Naive thymus-derived CD8-positive, alpha-beta T cell (primary cell): ENCODE measurements at regions of chr15 and their contacts with region 1.

Region 1: DNA sequence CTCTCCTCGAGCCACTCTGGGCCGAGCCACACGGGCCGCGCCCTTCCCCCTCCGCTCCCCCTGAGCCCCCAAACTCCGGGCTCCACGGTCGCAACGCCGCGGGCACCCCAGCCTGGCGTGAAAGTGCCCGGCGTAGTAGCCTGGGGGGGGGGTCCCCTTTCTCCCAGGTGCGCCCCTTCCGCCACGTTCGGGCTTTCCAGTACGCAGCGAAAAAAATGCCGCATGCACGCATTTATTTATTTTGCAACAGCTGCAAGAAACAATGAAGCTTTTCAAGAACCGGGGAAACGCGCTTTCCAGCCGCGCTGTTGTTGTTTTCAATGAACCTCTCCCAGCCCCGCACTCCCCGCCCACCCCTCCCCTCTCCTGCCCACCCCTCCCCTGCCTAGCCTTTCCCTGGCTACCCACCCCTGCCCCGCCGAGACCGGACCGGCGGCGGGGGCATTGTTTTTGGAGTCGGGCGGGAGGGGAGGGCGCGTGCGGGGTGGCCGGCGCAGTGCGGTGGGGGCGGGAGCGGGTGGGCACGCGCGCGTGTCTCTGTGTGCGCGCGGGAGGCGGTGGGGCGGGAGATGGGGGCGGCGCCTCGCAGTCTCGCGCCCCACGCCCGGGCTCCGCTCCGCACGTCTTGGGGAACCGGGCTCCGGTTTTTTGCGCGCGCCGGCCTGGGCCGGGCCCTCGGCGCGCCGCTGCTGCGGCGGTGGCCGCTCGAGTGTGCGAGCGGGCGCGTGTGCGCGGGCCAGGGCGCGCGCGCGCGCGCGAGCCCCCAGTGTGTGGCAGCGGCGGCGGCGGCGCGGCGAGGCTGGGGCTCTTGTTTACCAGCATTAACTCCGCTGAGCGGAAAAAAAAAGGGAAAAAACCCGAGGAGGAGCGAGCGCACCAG is at the start of gene IGF1R:
- DNase-seq: peak; percentile 84 to 95 (median 90)
- ATAC-seq: peak; percentile 41 to 62
- H3K4me3 Mint-ChIP-seq: peak within 1 kb of the TSS; percentile 80 to 95 (median 90)
- H3K27ac Mint-ChIP-seq: peak within 1 kb of the TSS; percentile 81 to 96 (median 94)
- H3K4me1 Mint-ChIP-seq: peaks cover 20 to 32% (median 28%) of the 10 kb centered on the region in 4 donors
- H3K27me3 Mint-ChIP-seq: peaks cover 0 to 29% (median 0%) of the 10 kb centered on the region in 5 donors
- polyA plus RNA-seq, gene IGF1R: 2.5 to 6.3 (median 4.9) TPM

Region 2: DNA sequence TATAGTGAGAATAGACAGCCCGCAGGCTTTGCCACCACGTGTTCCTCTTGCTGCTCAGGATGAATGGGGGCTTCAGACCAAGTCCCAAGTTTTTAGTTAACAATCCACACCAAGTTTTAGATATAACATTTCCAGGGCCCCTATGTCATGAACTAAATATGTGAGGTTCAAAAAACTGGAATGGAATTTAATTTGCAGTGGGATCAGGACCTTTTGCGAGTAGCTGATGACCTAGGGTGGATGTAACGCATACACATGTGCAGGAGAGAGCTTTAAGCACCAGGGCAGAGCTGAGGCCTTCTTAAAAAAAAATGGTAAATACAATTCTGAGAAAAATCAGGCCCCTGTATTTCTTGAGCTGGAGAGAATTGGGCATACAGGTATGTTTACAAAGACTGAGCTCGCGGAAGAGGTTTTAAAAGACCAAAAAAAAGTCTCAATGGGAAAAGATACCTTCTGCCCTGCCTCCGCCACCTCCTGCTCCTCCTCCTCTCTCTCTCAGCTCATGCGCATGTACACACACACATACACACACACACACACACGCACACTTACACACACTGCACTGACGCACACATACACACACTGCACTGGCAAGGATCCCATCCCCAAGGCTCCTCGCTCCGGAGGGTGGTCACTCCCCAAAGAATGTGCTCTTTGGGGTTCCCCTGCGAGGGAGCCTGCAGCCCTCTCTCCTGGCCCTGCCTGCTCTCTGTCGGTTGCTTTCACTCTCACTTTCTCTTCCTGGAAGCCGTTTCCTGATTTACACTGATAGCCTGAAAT is 47.9 kb before region 1 on chr15:
- POLR2A ChIA-PET with region 1: interaction called, 41 read pairs
- DNase-seq: peak in 9 of 10 donors; percentile 12 to 41 (median 19)
- ATAC-seq: peak; percentile 86 to 88
- H3K4me3 Mint-ChIP-seq: peak overlapping the region; percentile 83 to 97 (median 92)
- H3K27ac Mint-ChIP-seq: peak overlapping the region; percentile 93 to 99 (median 96)
- H3K4me1 Mint-ChIP-seq: peaks cover 17 to 24% (median 19%) of the 10 kb centered on the region in 4 donors
- H3K27me3 Mint-ChIP-seq: peaks cover 0 to 4% (median 0%) of the 10 kb centered on the region in 5 donors

Region 3: DNA sequence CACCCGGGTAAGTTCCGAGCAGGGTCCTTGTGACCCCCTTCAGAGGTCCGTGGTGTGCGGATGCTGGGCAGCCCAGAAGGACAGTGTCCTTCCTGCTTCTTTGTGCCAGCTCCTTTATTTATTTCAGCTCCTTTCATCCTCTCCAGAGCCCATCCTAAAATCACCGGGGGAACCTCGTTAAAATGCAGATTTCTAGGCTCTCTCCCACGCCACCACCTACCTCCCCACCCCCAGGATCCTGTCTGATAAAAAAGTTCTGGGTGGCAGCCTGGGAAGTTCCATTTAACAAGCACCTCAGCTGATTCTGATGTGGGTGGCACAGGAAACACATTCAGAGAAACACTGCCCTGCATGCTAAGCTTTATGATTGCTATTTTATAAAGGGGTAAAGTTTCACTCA is 12.2 kb before region 1 on chr15:
- POLR2A ChIA-PET with region 1: interaction called, 20 read pairs
- DNase-seq: peak in 2 of 10 donors; percentile 21 to 39
- ATAC-seq: peak; percentile 52 to 68
- H3K4me3 Mint-ChIP-seq: peak overlapping the region in 9 of 10 donors; percentile 12 to 75 (median 36)
- H3K27ac Mint-ChIP-seq: peak overlapping the region in 4 of 10 donors; percentile 76 to 84 (median 80)
- H3K4me1 Mint-ChIP-seq: peaks cover 7 to 20% (median 15%) of the 10 kb centered on the region in 4 donors
- H3K27me3 Mint-ChIP-seq: peaks cover 0 to 14% (median 0%) of the 10 kb centered on the region in 5 donors

Region 4: DNA sequence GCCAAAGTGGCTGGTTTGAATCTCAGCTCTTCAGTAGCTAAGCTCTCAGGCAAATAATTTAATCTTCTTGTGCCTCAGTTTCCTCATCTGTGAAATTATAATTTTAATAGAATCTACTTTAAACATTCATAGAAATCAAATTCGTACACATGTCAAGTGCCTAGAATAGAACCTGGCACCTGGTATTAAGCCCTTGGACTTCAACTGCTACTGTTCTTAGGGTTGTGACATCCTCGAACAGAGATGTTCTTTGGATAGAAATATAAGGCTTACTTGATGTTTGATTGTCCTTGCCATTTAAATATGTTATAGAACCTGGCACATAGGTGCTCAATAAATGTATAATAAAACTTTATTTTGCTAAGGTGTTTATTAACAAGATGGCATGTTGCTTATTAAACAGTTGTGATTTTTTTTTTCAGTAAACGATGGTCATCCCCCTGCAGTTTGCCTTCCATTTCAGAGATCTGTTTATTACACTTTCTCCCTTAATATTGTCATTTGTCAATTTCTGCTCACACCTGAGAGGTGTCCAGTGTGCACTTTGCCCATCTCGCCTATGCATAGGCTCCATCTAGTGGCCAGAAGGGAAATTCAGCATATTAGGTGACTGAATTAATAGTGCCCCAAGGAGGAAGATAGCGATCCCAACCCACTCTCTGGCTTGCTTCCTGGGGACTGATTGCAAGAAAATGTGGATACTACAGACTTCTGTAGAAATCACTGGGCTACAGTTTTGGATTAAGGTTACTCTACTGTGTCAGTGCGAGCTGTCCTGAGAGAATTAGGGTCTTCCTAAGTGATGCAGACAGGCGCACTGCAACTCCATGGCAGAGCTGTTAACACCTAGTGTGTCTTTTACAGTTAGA is 11.1 kb after region 1 on chr15:
- POLR2A ChIA-PET with region 1: interaction called, 12 read pairs
- DNase-seq: peak in 8 of 10 donors; percentile 30 to 68 (median 45)
- ATAC-seq: peak; percentile 75 to 86
- H3K4me3 Mint-ChIP-seq: no peak overlapping the region
- H3K27ac Mint-ChIP-seq: no peak overlapping the region
- H3K4me1 Mint-ChIP-seq: peaks cover 19 to 67% (median 59%) of the 10 kb centered on the region in 4 donors
- H3K27me3 Mint-ChIP-seq: peaks cover 0 to 4% (median 1%) of the 10 kb centered on the region in 5 donors